Posterior vena cava (tissue), 2 donors: ENCODE measurements at regions of chr16 and their contacts with region 1.

Region 1: GRCh38 chr16:87993901-87994300 is 42.7 kb downstream of the BANP start:
- DNase-seq: no peak

Region 2: GRCh38 chr16:88754912-88755744 is 761.2 kb after region 1 on chr16:
- intact Hi-C with region 1: loop called in 1 of 2 experiments (anchors 5 kb)
- DNase-seq: no peak